SK-N-SH (cell line): ENCODE measurements at regions of chr17 and their contacts with region 1.

Region 1: DNA sequence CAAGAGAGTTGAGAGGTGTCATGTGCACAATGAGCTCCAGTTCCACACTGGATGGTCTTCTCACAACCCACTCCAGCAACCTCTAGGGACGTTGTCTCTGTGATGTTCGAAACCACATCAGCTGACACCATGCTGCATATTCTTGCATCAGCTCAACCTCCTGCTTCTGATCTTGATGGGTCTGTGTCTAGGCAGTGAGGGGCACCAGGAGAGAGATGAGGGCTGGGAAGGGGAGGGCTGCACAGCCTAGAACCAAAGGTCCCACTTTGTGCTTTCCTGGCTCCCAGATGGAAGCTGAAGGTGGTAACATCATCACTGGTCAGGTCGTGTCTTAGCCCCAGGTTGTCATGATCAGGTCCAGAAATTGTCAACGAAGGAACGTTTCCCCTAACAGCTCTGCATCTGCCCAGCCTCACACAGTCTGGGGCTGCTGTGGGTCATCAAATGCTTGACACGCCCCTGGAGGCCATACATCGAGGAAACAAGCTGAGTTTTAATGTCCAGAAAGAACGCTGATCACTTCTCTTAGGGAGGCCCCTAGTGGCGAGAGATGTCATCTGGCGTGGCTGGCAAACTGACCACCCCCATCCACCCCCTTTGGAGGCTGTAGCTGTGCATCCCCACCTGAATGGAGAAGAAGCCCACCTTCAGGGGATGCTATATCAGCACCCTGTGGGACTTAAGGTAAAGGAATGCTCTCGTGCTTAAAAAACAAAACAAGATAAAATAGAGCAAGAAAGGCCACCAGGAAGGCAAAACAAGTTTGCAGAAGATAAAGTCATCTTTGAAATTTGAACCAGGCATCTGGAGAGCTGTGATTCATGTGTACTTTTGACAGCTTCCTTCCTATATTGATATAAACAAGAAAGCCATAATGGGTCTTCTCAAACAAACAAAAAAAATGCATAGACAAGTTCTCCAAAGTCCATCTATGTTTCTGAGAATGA is 58.3 kb downstream of the WIPI1 start:
- DNase-seq: peak; percentile 86
- H3K4me3 ChIP-seq: no peak overlapping the region; a peak in 1 of 4 replicates
- H3K27ac ChIP-seq: no peak overlapping the region
- H3K4me1 ChIP-seq: peaks cover 3 to 5% of the 10 kb centered on the region in 2 experiments; a peak in 2 of 4 replicates
- H3K27me3 ChIP-seq: no peaks in the 10 kb centered on the region
- CTCF ChIP-seq: peak; percentile 87
- EP300 ChIP-seq: no peak
- RAD21 ChIP-seq: peak; percentile 79

Region 2: GRCh38 chr17:68108313-68109000 is 290.5 kb before region 1 on chr17:
- CTCF ChIA-PET with region 1: no interaction called
- POLR2A ChIA-PET with region 1: no interaction called
- DNase-seq: no peak
- H3K4me3 ChIP-seq: no peak overlapping the region
- H3K27ac ChIP-seq: no peak overlapping the region
- H3K4me1 ChIP-seq: no peaks in the 10 kb centered on the region; a peak in 1 of 4 replicates
- H3K27me3 ChIP-seq: no peaks in the 10 kb centered on the region
- CTCF ChIP-seq: no peak
- EP300 ChIP-seq: no peak
- RAD21 ChIP-seq: no peak

Region 3: GRCh38 chr17:68273722-68274121 is 125.2 kb before region 1 on chr17:
- CTCF ChIA-PET with region 1: interaction called, 12 read pairs
- POLR2A ChIA-PET with region 1: no interaction called
- DNase-seq: no peak
- H3K4me3 ChIP-seq: no peak overlapping the region
- H3K27ac ChIP-seq: no peak overlapping the region
- H3K4me1 ChIP-seq: no peaks in the 10 kb centered on the region
- H3K27me3 ChIP-seq: no peaks in the 10 kb centered on the region; the same call in 1 of the 2 replicates
- CTCF ChIP-seq: no peak
- EP300 ChIP-seq: no peak
- RAD21 ChIP-seq: no peak

Region 4: DNA sequence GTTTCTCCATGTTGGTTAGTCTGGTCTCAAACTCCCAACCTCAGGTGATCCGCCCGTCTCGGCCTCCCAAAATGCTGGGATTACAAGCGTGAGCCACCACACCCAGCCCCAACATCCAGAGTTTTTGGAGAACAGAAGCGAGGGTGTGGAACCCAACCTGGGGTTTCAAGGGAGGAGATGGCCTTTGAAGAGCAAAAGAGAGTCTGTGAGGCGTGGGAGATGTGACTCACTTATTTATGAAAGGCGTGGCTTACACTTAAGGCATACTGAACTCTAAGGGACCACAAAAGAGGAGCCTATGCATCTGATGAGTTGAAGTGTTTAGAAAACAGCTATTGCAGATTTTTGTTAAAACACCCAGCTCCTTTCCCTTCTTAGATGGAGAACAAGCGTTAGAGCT is 88.8 kb before region 1 on chr17:
- CTCF ChIA-PET with region 1: interaction called, 14 read pairs
- POLR2A ChIA-PET with region 1: no interaction called
- DNase-seq: no peak
- H3K4me3 ChIP-seq: no peak overlapping the region
- H3K27ac ChIP-seq: no peak overlapping the region
- H3K4me1 ChIP-seq: no peaks in the 10 kb centered on the region
- H3K27me3 ChIP-seq: peaks cover 7% of the 10 kb centered on the region; the same call in 1 of the 2 replicates
- CTCF ChIP-seq: no peak
- EP300 ChIP-seq: no peak
- RAD21 ChIP-seq: no peak

Region 5: DNA sequence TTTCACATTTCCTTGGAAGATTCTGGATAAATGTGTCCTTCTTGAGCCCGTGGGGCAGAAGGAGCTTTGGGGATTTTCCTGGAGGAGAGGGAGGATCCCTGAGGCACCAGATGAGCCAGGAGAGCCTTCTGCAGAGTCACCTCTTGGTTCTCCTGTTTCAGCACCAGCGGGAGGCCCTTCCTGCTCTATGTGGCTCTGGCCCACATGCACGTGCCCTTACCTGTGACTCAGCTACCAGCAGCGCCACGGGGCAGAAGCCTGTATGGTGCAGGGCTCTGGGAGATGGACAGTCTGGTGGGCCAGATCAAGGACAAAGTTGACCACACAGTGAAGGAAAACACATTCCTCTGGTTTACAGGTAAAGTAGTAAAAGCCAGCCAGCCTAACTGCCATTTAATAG is 30.6 kb before region 1 on chr17:
- CTCF ChIA-PET with region 1: interaction called, 14 read pairs
- POLR2A ChIA-PET with region 1: no interaction called
- DNase-seq: no peak
- H3K4me3 ChIP-seq: no peak overlapping the region
- H3K27ac ChIP-seq: no peak overlapping the region
- H3K4me1 ChIP-seq: no peaks in the 10 kb centered on the region
- H3K27me3 ChIP-seq: 0 out of 2 replicates have a peak, but pooled peaks cover 11% of the 10 kb centered on the region
- CTCF ChIP-seq: no peak
- EP300 ChIP-seq: no peak
- RAD21 ChIP-seq: no peak

Region 6: DNA sequence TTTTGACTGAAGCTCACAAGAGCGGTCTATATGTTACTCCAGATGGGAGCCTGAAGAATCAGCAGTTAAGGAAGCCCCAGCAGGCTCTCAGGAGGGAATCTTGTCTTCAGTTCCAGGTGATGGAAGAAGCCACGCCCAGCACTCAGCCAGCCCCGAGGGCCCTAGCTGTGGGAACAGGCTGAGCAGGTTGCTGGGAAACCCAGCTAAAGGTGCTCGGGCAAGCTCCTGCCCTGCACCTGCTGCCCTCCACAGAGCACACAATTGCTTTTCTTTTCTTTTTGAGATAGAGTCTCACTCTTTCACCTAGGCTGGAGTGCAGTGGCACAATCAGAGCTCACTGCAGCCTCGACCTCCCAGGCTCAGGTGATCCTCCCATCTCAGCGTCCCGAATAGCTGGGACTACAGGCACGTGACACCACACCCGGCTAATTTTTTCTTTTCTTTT is 26.0 kb after region 1 on chr17:
- CTCF ChIA-PET with region 1: interaction called, 20 read pairs
- POLR2A ChIA-PET with region 1: no interaction called
- DNase-seq: no peak
- H3K4me3 ChIP-seq: no peak overlapping the region
- H3K27ac ChIP-seq: no peak overlapping the region
- H3K4me1 ChIP-seq: no peaks in the 10 kb centered on the region
- H3K27me3 ChIP-seq: no peaks in the 10 kb centered on the region
- CTCF ChIP-seq: no peak
- EP300 ChIP-seq: no peak
- RAD21 ChIP-seq: no peak